ENCODE measurements at regions of chr4 and their contacts with region 1.

Region 1: DNA sequence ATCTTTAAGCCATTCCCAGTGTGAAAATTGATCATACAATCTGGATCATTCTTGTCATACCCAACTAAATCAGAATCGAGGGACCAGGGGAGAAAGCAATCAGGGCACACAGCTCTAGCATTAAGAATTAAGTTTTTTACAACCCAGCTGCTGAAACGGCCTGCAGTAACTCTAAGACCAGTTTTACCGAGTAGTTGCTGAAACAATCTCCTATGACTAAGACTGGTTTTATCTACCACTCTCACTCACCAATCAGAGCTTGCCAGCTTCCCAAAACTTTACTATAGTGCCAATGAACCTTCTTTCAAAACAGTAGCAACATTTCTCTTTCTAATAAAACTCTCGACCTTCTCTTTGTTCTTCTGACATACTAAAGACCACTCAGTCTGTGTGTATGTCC is 2.8 kb upstream of the SAP30 start:
- DNase-seq: no peak
- ATAC-seq: no peak

Region 2: DNA sequence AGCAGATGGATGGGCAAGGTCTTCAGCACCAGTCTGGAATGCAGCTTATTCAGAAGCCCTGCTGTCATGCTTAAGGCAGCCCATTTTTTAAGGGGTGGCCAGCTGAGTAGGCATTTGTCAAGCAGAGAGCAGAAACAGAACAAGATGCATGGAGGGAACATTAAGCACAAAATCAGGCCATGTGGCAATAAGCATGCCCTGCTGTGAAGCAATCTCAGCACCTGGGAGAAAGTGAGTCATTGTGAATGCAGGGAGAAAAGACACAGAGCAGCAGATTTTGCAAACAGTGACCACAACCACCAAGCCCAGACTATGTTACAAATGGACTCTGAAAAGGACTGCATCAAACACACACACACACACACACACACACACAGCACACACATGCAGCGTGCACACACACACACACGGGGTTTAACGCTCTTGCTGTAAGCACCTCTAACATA is 293.4 kb before region 1 on chr4:
- intact Hi-C with region 1: no loop called
- DNase-seq: no peak
- ATAC-seq: no peak

Region 3: GRCh38 chr4:173334085-173334772 is 33.7 kb before region 1 on chr4 and contains the start of gene HMGB2:
- intact Hi-C with region 1: loop called in 1 of 2 experiments (anchors 2 kb)
- DNase-seq: peak; percentile 100
- ATAC-seq: peak; percentile 96 to 98
- total RNA-seq, gene HMGB2: 40.0 to 44.0 TPM

Region 4: DNA sequence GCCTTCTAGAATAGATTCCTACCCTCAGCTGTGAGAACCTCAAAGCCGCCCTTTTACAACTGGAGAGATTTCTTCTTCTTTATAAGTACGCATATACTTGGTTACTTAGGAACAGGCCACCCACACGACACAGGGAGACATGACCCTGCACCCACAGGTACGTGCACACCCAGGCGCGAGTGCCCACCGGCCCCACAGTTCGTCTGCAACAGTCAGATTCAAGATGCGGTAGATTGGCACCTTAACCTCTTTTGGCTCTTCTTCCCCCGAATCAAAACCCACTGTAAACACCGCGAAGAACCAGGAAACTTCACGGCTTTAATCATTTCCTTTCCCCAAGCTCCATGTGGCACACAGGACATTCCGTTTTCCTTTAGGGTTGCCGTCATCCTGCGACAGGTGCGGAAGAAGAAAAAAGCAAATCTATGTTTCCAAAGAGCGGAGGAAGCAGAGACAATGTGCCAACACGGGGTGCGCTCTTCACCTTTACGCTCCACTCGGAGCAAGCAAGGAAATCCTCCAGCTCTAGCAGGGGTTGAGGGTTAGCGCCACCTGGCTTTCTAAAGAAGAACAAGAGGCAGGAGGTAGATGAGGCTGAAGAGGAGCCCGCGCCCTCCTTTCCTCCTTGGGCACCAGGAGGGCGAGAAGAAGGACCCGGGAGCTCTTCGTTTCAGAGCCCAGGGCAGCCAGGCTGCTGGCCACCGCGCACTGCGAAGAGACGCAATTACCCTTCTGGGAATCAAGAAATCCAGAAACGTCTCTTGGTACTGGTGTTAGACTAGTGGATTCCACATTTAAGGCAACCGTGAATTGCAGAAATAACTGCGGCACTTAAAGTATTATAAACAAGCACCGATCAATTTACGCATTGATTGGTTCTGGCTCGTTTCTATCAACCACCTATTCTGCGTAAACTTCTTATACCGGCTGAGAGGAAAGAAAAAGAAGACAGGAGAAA is 126.3 kb after region 1 on chr4:
- intact Hi-C with region 1: no loop called
- DNase-seq: peak; percentile 70
- ATAC-seq: peak; percentile 86 to 91